Activated naive CD4-positive, alpha-beta T cell treated with anti-CD3 and anti-CD28 coated beads, Interleukin-2, amount 10 ng/mL, durations not matched to agents 7 days and 5 days (primary cell): ENCODE measurements at regions of chr20 and their contacts with region 1.

Region 1: GRCh38 chr20:40945754-40946450 is 82.7 kb upstream of the TOP1 start:
- DNase-seq: peak; percentile 40
- H3K4me3 Mint-ChIP-seq: no peak overlapping the region
- H3K27ac Mint-ChIP-seq: no peak overlapping the region
- H3K4me1 Mint-ChIP-seq: no peaks in the 10 kb centered on the region
- H3K27me3 Mint-ChIP-seq: peaks cover 16% of the 10 kb centered on the region

Region 2: DNA sequence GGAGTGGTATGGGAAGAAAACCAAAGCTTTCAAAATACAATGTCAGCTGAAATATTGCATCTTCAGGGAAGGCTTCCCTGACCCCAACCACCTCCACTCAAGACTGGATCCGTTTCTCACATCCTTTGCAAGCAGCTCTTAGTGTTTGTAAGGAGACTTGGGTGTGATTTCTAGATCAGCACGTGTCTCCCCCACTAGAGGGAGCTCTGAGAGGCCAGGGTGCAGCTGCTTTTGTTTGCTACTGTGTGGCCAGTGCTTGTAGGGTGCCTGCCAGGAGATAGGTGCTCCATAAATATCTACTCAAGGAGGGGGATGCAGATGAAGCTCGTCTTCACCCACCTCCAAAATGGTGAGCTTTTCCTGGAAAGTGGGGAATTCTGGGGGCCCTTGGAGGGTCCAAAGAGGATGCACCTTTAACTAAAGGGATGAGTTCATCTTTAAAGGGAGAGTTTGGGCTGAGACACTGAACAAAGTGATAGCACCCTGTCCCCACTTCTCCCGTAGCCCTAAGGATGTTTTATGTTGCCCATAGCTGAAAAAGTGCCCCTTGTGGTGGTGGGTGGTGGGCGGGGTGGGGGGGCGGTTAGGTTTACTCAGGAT is 204.3 kb before region 1 on chr20:
- CTCF ChIA-PET with region 1: interaction called, 20 read pairs
- DNase-seq: peak; percentile 61
- H3K4me3 Mint-ChIP-seq: no peak overlapping the region
- H3K27ac Mint-ChIP-seq: no peak overlapping the region
- H3K4me1 Mint-ChIP-seq: no peaks in the 10 kb centered on the region
- H3K27me3 Mint-ChIP-seq: peaks cover 31% of the 10 kb centered on the region